ENCODE measurements at regions of chr12 and their contacts with region 1.

Region 1: GRCh38 chr12:31896514-31897039 is 62.6 kb upstream of the RESF1 start:
- DNase-seq: peak; percentile 96
- H3K4me3 Mint-ChIP-seq: peak overlapping the region; percentile 55
- H3K27ac Mint-ChIP-seq: peak overlapping the region; percentile 99
- H3K4me1 Mint-ChIP-seq: peaks cover 58% of the 10 kb centered on the region
- H3K27me3 Mint-ChIP-seq: no peaks in the 10 kb centered on the region

Region 2: GRCh38 chr12:31317471-31318395 is 578.8 kb before region 1 on chr12:
- CTCF ChIA-PET with region 1: no interaction called
- intact Hi-C with region 1: loop called (anchors 2 kb)
- DNase-seq: no peak
- H3K4me3 Mint-ChIP-seq: peak overlapping the region; percentile 74
- H3K27ac Mint-ChIP-seq: peak overlapping the region; percentile 99
- H3K4me1 Mint-ChIP-seq: peaks cover 73% of the 10 kb centered on the region
- H3K27me3 Mint-ChIP-seq: no peaks in the 10 kb centered on the region

Region 3: GRCh38 chr12:31682136-31682962 is 214.2 kb before region 1 on chr12:
- CTCF ChIA-PET with region 1: no interaction called
- intact Hi-C with region 1: loop called (anchors 2 kb)
- DNase-seq: peak; percentile 83
- H3K4me3 Mint-ChIP-seq: no peak overlapping the region
- H3K27ac Mint-ChIP-seq: peak overlapping the region; percentile 84
- H3K4me1 Mint-ChIP-seq: peaks cover 5% of the 10 kb centered on the region
- H3K27me3 Mint-ChIP-seq: no peaks in the 10 kb centered on the region

Region 4: DNA sequence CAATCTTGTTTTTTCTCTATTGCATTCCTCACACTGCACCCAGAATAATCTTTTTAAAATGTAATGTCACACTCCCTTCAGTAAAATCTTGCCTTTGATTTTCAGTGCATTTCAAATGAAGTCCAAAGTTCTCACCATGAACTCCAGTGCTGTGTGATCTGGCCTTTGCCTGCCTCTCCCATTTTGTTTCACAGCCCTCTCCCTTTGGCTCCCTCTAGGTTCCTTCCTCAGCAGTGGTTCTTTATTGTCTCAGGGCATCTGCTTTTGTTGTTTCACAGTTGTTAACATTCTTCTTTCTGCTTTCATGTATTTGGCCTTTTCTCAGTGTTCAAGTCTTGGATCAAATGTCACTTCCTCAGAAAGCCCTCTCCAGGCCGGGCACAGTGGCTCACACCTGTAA is 83.3 kb before region 1 on chr12:
- CTCF ChIA-PET with region 1: no interaction called
- intact Hi-C with region 1: loop called (anchors 1 kb)
- DNase-seq: no peak
- H3K4me3 Mint-ChIP-seq: no peak overlapping the region
- H3K27ac Mint-ChIP-seq: no peak overlapping the region
- H3K4me1 Mint-ChIP-seq: peaks cover 18% of the 10 kb centered on the region
- H3K27me3 Mint-ChIP-seq: no peaks in the 10 kb centered on the region

Region 5: DNA sequence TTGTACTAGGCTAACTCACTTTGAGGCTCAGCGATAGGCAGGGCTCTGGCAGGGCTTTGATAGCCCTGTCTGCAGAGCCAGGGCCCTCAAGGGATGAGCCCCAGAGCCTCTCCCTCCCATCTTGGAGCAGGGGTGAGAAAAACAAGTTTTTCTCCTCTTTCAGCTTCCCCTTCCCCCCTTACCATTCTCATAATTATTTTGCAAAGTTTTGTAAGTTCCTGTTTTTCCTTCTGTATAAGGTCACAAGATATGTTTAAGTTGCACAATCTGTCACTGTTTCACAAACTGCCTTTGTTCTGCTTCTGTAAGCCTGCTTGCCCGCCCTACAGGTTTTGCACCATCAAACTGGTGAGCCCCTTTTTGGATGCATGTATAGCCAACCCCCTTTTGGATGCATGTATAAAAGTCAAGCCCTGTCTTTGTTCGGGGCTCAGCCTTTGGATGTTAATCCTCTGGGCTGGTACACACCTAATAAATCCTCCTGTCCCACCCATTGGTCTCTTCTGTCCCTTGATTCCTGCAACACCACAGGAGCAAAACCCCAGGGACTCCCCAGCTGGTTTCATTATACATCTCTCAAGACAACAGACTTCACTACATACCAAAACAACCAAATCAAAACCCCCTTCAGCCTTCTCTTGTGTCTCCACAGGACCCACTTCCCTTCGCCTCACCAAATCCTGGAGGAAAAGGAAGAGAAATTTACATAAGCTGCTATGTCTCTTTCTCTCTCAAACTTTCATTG is 10.2 kb after region 1 on chr12:
- CTCF ChIA-PET with region 1: interaction called, 4 read pairs
- intact Hi-C with region 1: loop called (anchors 1 kb)
- DNase-seq: peak; percentile 48
- H3K4me3 Mint-ChIP-seq: no peak overlapping the region
- H3K27ac Mint-ChIP-seq: peak overlapping the region; percentile 59
- H3K4me1 Mint-ChIP-seq: peaks cover 19% of the 10 kb centered on the region
- H3K27me3 Mint-ChIP-seq: no peaks in the 10 kb centered on the region

Region 6: DNA sequence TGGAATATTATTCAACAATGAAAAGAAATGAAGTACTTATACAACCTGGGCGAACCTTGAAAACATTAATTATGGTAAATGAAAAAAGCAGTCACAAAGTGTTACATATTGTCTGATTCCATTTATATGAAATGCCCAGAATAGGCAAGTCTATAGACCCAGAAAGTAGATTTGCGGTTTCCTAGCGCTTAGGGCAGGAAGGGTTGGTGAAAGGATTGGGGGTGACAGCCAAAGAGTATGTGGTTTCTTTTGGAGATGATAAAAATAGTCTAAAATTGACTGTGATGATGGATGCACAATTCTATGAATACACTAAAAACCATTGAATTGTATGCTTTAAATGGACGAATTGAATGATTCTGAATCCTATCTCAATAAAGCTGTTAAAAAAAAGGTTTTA is 118.5 kb after region 1 on chr12:
- CTCF ChIA-PET with region 1: no interaction called
- intact Hi-C with region 1: no loop called
- DNase-seq: no peak
- H3K4me3 Mint-ChIP-seq: no peak overlapping the region
- H3K27ac Mint-ChIP-seq: no peak overlapping the region
- H3K4me1 Mint-ChIP-seq: peaks cover 5% of the 10 kb centered on the region
- H3K27me3 Mint-ChIP-seq: no peaks in the 10 kb centered on the region

Region 7: GRCh38 chr12:32025906-32026305 is 129.3 kb after region 1 on chr12:
- CTCF ChIA-PET with region 1: no interaction called
- intact Hi-C with region 1: loop called (anchors 1 kb)
- DNase-seq: peak; percentile 84
- H3K4me3 Mint-ChIP-seq: no peak overlapping the region
- H3K27ac Mint-ChIP-seq: peak overlapping the region; percentile 81
- H3K4me1 Mint-ChIP-seq: peaks cover 24% of the 10 kb centered on the region
- H3K27me3 Mint-ChIP-seq: no peaks in the 10 kb centered on the region

Region 8: GRCh38 chr12:32377344-32378055 is 480.9 kb after region 1 on chr12:
- CTCF ChIA-PET with region 1: no interaction called
- intact Hi-C with region 1: no loop called
- DNase-seq: no peak
- H3K4me3 Mint-ChIP-seq: no peak overlapping the region
- H3K27ac Mint-ChIP-seq: no peak overlapping the region
- H3K4me1 Mint-ChIP-seq: no peaks in the 10 kb centered on the region
- H3K27me3 Mint-ChIP-seq: no peaks in the 10 kb centered on the region

Measured in activated naive CD4-positive, alpha-beta T cell treated with anti-CD3 and anti-CD28 coated beads for 36 hours (primary cell).